Mucosa of descending colon (tissue), 3 donors: ENCODE measurements at regions of chr20 and their contacts with region 1.

Region 1: DNA sequence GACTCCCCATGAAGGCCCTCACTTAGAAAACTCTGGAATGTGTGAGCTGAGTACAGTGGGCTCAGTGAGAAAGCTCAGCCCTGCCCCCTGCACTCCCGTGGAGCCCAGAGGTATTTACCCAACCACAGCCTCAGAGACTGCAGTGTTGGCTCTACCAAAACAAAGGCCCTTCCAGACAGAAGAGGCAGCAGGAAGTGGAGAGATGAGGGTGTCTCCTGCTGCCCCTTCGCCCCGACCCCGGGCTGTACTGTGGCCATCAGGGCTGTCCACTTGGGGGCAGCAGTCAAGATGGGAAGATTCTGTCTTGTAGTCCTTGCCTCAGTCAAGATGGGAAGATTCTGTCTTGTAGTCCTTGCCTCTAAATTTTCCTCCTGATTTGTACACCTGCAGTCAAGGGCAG is 341.3 kb downstream of the TAF4 start:
- DNase-seq: no peak
- ATAC-seq: no peak
- H3K4me3 ChIP-seq: no peak overlapping the region
- H3K4me1 ChIP-seq: no peaks in the 10 kb centered on the region
- CTCF ChIP-seq: no peak

Region 2: DNA sequence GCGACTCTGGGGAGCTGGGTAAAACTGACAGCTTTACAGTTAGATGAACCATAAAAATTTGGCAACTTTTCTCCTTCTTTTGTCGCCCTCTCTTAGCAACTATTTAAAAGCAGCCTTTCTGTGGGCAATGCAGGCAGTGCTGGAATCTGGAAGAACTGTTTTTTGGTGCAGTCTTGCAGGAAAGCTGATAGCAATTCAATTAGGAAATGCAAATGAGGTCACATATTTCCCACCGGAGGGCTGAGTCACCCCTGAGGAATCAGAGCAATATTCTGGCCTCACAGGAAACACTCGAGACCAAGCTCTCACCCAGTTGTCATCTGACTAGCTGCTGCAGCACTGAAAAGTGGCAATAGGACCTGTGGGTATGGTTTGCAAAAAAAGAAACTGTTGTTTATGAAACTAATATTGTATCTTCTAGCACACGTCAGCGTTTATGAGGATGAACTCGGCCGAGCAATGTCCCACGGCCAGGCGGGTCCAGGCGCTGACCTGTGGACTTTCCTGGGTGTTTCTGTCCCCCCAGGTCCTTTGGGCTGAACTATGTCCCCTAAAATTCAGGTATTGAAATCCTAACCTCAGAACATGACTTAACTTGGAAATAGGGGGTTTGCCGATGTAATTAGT is 29.1 kb after region 1 on chr20:
- intact Hi-C with region 1: loop called in 1 of 2 experiments (anchors 2 kb)
- DNase-seq: no peak
- ATAC-seq: no peak
- H3K4me3 ChIP-seq: no peak overlapping the region
- H3K4me1 ChIP-seq: no peaks in the 10 kb centered on the region
- CTCF ChIP-seq: no peak